PC-3 (cell line): ENCODE measurements at regions of chr2 and their contacts with region 1.

Region 1: DNA sequence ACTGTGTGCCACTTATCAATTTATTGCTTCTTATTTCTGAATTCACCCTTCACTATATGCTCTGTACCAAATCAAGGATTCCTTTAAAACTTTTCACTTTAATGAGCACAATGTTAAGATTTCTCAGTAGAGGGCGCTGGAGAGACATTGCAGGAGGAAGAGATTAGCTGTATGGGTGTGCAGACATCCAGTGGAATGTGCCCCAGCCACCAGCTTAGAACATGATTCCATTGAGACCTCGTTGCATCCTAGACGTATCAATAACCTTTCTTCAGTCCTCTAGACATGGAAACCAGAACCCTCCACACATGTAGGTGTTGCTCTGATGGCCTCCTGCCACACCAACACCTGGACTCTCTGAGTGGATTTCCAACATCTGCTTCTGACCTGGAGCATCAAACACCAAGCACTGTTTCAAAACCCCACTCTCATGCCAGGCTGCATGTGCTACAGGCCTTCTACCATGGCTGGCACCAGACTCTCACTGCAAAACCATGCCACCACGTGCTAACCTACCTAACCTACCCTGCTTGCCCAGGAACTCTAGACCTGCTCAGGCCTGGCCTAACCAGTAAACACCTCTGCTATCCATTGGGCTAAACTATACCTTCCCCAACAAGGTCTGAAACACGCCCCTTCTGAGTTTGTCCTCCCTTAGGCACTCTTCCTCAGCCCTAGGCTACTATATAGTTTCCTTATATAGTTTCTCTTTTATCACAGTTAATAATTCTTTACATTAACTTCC is 633.2 kb upstream of the PKDCC start:
- DNase-seq: peak; percentile 81
- ATAC-seq: peak; percentile 64
- H3K4me3 ChIP-seq: no peak overlapping the region
- H3K27ac ChIP-seq: no peak overlapping the region
- H3K4me1 ChIP-seq: no peaks in the 10 kb centered on the region
- H3K27me3 ChIP-seq: peaks cover 6% of the 10 kb centered on the region; the same call in 1 of the 2 replicates
- CTCF ChIP-seq: peak; percentile 88

Region 2: DNA sequence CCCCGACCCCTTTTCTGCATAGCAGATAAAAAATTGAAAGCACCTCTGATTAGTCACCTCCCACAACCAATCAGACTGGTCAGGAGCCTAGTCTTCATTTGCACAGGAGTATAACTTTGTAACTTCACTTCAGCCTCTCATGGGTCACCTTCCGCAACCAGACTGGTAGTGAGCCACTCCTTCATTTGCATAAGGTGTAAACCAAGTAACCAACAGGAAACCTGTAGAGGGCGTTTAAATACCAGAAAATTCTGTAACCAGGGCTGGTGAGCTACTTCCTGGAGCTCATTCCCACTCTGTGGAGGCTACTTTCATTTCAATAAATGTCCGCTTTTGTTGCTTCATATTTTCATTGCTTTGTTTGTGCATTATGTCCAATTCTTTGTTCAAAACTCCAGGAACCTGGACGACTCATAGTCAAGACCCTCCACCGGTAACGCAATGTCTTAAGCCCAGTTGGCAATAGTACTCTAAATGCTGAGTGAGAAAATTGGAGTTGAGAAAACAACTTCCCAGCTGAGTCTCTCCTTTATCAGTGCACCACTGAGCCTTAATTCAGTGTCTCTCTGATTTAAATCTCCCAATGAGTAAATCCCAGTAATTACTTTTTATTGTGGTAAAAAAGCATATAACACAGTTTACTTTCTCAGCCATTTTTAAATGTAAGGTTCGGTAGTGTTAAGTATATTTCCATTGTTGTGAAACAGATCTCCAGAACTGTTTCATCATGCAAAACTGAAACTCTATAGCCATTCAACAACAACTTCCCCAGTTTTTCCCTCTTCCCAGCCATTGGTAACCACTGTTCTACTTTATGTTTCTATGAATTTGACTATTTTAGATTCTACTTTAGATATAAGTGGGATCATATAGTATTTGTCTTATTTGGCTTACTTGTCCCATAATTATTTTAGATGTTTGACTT is 570.0 kb before region 1 on chr2:
- CTCF ChIA-PET with region 1: no interaction called
- POLR2A ChIA-PET with region 1: no interaction called
- intact Hi-C with region 1: loop called (anchors 5 kb)
- DNase-seq: peak; percentile 92
- ATAC-seq: peak; percentile 99
- H3K4me3 ChIP-seq: peak overlapping the region; percentile 68
- H3K27ac ChIP-seq: no peak overlapping the region
- H3K4me1 ChIP-seq: peaks cover 7% of the 10 kb centered on the region
- H3K27me3 ChIP-seq: no peaks in the 10 kb centered on the region
- CTCF ChIP-seq: peak; percentile 82

Region 3: GRCh38 chr2:41313082-41313481 is 101.6 kb before region 1 on chr2:
- CTCF ChIA-PET with region 1: interaction called, 11 read pairs
- POLR2A ChIA-PET with region 1: no interaction called
- intact Hi-C with region 1: no loop called
- DNase-seq: no peak
- ATAC-seq: peak; percentile 64
- H3K4me3 ChIP-seq: no peak overlapping the region
- H3K27ac ChIP-seq: no peak overlapping the region
- H3K4me1 ChIP-seq: no peaks in the 10 kb centered on the region
- H3K27me3 ChIP-seq: no peaks in the 10 kb centered on the region
- CTCF ChIP-seq: no peak

Region 4: GRCh38 chr2:41698678-41699422 is 284.2 kb after region 1 on chr2:
- CTCF ChIA-PET with region 1: interaction called, 4 read pairs
- POLR2A ChIA-PET with region 1: no interaction called
- intact Hi-C with region 1: loop called (anchors 2 kb)
- DNase-seq: peak; percentile 20
- ATAC-seq: peak; percentile 61
- H3K4me3 ChIP-seq: no peak overlapping the region
- H3K27ac ChIP-seq: no peak overlapping the region
- H3K4me1 ChIP-seq: no peaks in the 10 kb centered on the region
- H3K27me3 ChIP-seq: peaks cover 26% of the 10 kb centered on the region; the same call in 1 of the 2 replicates
- CTCF ChIP-seq: peak; percentile 91

Region 5: DNA sequence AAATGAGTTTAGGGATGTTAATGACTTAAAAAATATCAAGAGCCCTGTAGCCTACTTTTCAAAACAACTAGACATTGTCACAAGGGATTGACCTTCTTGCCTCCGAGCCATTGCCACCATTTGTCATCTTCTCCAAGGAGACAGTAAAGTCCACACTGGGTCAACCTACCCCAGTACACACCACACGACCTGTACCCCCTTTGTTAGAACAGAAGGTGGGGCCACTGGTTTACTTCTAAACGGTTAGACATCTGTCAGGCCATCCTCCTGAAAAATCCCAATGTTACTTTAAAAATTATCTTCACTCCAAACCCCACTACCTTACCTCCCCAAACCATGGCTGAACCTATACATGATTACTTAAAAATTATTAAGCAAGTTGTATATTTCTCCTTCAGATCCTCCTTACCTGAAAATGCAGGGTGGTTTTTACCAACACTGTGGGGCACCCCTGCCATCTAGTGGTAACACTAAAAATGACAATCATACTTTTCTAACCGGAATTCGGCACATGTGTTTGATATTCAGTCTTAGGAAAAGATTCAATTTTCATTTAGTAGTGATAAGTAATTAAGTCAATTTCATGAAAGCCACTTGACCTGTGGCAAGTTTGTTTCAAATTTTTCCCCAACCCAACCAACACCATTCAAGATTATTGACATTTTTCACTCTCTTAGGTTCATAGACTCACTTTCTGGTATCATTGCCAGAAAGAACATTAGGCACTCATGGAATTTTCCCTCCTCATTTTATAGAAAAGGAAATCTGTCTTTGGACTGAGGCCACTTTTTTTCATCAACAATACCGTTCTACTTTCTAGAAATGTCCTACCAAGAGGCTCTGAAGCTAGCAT is 367.9 kb after region 1 on chr2:
- CTCF ChIA-PET with region 1: no interaction called
- POLR2A ChIA-PET with region 1: no interaction called
- intact Hi-C with region 1: loop called (anchors 1 kb)
- DNase-seq: peak; percentile 69
- ATAC-seq: peak; percentile 33; the same call in 1 of the 2 replicates
- H3K4me3 ChIP-seq: no peak overlapping the region
- H3K27ac ChIP-seq: no peak overlapping the region
- H3K4me1 ChIP-seq: no peaks in the 10 kb centered on the region
- H3K27me3 ChIP-seq: peaks cover 30% of the 10 kb centered on the region; the same call in 1 of the 2 replicates
- CTCF ChIP-seq: peak; percentile 92